Ovary (tissue), 10 donors: ENCODE measurements at regions of chr11 and their contacts with region 1.

Region 1: GRCh38 chr11:121534131-121535093 is 81.6 kb upstream of the SORL1-AS1 start:
- DNase-seq: peak; percentile 29 to 54 (median 39)
- H3K4me3 ChIP-seq: no peak overlapping the region
- H3K27ac ChIP-seq: no peak overlapping the region
- H3K4me1 ChIP-seq: no peaks in the 10 kb centered on the region
- H3K27me3 ChIP-seq: no peaks in the 10 kb centered on the region
- CTCF ChIP-seq: peak in 2 of 3 donors; percentile 57 to 64
- EP300 ChIP-seq: no peak
- POLR2A ChIP-seq: no peak

Region 2: DNA sequence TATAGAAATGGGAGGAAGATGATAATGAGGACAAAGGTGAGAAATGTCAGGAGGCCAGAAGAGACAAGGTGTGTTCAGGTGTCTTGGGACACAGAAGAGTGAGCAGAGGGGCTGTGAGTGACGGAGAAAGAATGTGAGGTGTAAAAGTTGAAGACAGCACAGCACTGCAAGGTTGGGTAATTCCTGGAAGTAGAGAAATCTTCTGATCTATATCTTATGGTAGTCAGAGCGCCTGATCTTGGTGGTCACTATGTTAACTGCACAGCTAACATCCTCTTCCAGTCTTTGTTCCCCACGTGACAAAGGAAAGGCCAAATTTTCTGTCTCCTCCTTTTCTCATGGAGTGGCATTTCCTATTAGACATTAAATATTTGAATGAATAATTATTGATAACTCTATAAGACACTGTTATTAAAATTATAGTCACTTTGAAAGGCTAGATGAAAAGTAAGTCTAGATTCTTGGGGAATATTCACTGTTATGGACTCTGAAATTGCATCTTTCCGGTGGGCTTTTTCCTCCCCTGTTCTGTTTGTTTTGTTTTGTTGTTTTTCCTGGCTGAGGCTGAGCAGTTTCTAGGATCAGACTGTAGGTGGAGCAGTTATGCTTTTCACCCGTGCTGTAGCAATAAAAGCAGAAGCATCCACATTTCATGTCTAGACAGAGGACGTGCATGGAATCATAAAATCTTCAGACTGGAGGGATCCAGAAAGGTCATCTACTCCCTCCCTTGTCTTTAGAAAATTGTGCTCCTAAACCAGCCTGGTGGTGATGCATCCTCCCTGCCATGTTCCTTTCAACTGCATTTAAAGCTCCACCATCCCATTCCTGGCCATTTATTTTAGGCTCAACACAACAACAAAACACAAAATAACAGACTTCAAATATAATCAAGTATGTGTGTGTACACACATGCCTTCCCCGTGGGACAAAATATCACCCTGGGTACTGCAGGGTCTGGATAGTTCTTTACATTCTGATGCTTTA is 215.3 kb before region 1 on chr11:
- intact Hi-C with region 1: loop called in 3 of 4 experiments (anchors 2 to 10 kb)
- DNase-seq: peak in 2 of 5 donors; percentile 22 to 27
- H3K4me3 ChIP-seq: no peak overlapping the region
- H3K27ac ChIP-seq: no peak overlapping the region
- H3K4me1 ChIP-seq: no peaks in the 10 kb centered on the region
- H3K27me3 ChIP-seq: no peaks in the 10 kb centered on the region
- CTCF ChIP-seq: peak; percentile 34 to 68 (median 53)
- EP300 ChIP-seq: no peak
- POLR2A ChIP-seq: no peak

Region 3: GRCh38 chr11:121446752-121447156 is 87.7 kb before region 1 on chr11:
- intact Hi-C with region 1: loop called in 2 of 4 experiments (anchors 10 kb)
- DNase-seq: no peak
- H3K4me3 ChIP-seq: no peak overlapping the region
- H3K27ac ChIP-seq: no peak overlapping the region
- H3K4me1 ChIP-seq: peaks cover 3% of the 10 kb centered on the region
- H3K27me3 ChIP-seq: no peaks in the 10 kb centered on the region
- CTCF ChIP-seq: no peak
- EP300 ChIP-seq: no peak
- POLR2A ChIP-seq: no peak

Region 4: DNA sequence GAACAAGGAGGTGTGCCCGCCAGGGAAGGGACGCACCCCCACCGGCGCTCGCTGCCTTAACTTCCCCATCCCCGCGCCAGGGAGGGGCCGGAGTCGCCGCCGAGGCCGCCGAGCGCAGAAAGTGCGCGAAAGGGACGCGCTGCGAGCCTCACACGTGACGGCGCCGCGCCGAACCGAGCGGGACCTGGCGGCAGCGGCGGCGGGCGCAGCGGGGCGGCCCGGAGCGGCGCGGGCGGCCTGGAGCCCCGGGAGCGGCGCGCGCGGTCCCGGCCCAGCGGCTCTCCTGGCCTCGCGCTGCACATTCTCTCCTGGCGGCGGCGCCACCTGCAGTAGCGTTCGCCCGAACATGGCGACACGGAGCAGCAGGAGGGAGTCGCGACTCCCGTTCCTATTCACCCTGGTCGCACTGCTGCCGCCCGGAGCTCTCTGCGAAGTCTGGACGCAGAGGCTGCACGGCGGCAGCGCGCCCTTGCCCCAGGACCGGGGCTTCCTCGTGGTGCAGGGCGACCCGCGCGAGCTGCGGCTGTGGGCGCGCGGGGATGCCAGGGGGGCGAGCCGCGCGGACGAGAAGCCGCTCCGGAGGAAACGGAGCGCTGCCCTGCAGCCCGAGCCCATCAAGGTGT is 82.3 kb before region 1 on chr11 and contains the start of gene SORL1:
- intact Hi-C with region 1: loop called in 2 of 4 experiments (anchors 10 kb)
- DNase-seq: peak; percentile 70 to 89 (median 78)
- H3K4me3 ChIP-seq: peak within 1 kb of the TSS; percentile 80
- H3K27ac ChIP-seq: no peak within 1 kb of the TSS
- H3K4me1 ChIP-seq: peaks cover 3% of the 10 kb centered on the region
- H3K27me3 ChIP-seq: no peaks in the 10 kb centered on the region
- CTCF ChIP-seq: peak in 2 of 3 donors; percentile 79 to 80
- EP300 ChIP-seq: no peak
- POLR2A ChIP-seq: no peak
- total RNA-seq, gene SORL1: 10.5 to 64.5 (median 29.8) TPM

Region 5: GRCh38 chr11:121575250-121575962 is 41.0 kb after region 1 on chr11:
- intact Hi-C with region 1: no loop called
- DNase-seq: peak; percentile 80 to 93 (median 90)
- H3K4me3 ChIP-seq: no peak overlapping the region
- H3K27ac ChIP-seq: peak overlapping the region in 1 of 2 donors; percentile 24
- H3K4me1 ChIP-seq: peaks cover 2% of the 10 kb centered on the region
- H3K27me3 ChIP-seq: no peaks in the 10 kb centered on the region
- CTCF ChIP-seq: no peak
- EP300 ChIP-seq: peak; percentile 42
- POLR2A ChIP-seq: no peak

Region 6: DNA sequence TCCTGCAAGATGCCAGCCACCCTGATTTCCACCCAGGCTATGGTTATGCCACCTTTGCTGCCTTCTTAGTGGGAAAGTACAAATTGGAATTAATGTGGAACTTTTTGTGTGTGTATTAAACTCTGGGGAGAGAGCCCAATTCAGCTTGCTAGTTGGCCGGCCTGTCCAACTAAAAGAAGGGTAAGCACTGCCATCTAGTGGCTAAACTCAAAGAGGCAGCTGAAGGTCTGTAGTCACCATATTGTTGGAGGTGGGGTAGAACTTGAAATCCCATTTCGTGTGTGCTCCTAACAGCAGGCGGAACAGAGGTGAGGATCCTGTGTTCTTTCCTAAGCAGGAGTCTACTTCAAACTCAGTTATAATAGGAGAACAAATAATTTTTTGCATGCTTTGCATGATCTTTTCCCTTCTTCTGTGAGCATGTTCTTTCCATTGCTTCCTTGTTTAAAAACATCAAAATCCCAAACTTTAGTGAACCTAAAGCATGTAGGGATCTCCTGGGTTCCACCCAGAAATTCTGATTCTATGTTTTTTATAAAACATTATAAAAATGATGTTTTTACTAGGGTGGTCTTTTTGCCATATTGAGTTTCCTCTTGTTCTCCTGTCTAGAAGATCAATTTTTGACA is 57.1 kb after region 1 on chr11:
- intact Hi-C with region 1: loop called in 1 of 4 experiments (anchors 5 kb)
- DNase-seq: peak; percentile 47 to 79 (median 60)
- H3K4me3 ChIP-seq: no peak overlapping the region
- H3K27ac ChIP-seq: no peak overlapping the region
- H3K4me1 ChIP-seq: no peaks in the 10 kb centered on the region
- H3K27me3 ChIP-seq: no peaks in the 10 kb centered on the region
- CTCF ChIP-seq: peak; percentile 29 to 82 (median 77)
- EP300 ChIP-seq: no peak
- POLR2A ChIP-seq: no peak